Natural killer cell (primary cell): ENCODE measurements at regions of chr11 and their contacts with region 1.

Region 1: DNA sequence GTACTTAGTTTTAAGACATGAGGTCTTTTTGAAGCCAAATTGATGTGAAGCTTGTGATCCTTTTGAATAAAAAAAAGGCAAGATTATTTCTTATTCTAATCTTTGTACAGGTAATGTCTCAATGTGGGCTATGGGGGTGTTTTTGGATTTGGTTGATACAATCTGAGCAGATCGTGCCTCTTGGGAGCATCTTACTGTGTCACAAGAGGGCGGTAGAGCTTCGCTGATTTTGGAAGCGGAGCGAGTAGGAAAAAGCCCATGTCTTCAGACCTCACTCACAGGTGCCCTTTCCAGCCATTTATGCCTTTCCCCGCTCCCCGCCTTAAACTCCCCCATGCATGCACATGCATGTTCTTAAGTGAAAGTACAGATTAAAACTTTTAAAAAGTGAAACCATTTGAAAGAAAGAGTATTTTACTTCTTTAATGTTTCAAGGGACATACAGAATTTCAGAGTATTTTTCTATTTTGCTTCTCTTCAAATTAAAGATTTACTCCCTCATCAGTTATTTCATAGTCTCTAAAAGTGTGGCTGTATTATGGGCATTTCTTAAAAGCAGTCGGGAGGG is 18.8 kb downstream of the DDX25 start:
- DNase-seq: peak in 1 of 2 donors; percentile 80
- ATAC-seq: peak in 1 of 3 donors; percentile 60
- H3K4me3 ChIP-seq: no peak overlapping the region
- H3K4me3 Mint-ChIP-seq: no peak overlapping the region
- H3K27ac ChIP-seq: no peak overlapping the region
- H3K27ac Mint-ChIP-seq: no peak overlapping the region
- H3K4me1 ChIP-seq: no peaks in the 10 kb centered on the region
- H3K4me1 Mint-ChIP-seq: peaks cover 0 to 4% of the 10 kb centered on the region in 2 donors
- H3K27me3 ChIP-seq: no peaks in the 10 kb centered on the region
- H3K27me3 Mint-ChIP-seq: peaks cover 13 to 27% of the 10 kb centered on the region in 2 donors
- CTCF ChIP-seq: peak; percentile 32

Region 2: DNA sequence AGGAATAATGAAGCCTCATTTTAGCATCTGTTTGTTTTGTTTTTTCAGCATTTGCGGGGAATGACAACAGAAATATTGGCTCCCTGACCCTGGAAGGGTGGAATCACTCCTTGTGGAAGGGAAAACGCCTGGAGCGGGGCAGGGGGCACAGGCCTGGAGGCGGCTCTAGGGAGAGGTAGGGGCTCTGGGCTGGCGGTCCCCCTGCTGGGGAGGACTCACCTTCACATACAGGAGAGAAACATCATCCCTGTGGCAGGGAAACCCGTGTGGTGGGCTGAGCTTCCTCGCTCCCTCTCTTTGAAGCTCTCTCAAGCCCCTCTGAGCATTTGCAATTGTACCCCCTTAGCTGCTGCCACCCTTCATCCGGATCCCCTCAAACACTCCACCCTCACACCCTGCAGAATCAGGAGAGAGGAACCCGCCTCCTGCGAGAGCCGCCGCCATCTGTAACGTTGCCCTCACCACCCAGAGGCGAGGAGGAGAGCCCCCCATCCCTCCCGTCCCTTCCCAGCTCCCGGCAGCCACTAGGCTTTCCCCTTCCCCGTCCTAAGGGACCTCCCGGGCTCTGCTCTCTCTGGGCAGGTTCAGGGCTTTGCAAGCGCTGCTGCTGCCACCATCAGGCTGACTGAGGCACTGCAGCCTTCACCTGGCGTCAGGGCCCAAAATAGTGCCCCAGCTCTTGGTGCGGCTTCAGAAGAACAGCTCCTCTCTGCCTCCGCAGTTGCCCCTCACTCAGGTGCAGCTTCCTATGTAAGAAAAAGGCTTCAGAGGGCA is 1067.0 kb after region 1 on chr11:
- intact Hi-C with region 1: loop called (anchors 5 kb)
- DNase-seq: peak; percentile 56 to 62
- ATAC-seq: peak; percentile 64 to 90 (median 69)
- H3K4me3 ChIP-seq: no peak overlapping the region
- H3K4me3 Mint-ChIP-seq: no peak overlapping the region
- H3K27ac ChIP-seq: no peak overlapping the region
- H3K27ac Mint-ChIP-seq: no peak overlapping the region
- H3K4me1 ChIP-seq: no peaks in the 10 kb centered on the region
- H3K4me1 Mint-ChIP-seq: peaks cover 0 to 5% of the 10 kb centered on the region in 2 donors
- H3K27me3 ChIP-seq: no peaks in the 10 kb centered on the region
- H3K27me3 Mint-ChIP-seq: peaks cover 19 to 46% of the 10 kb centered on the region in 2 donors
- CTCF ChIP-seq: peak; percentile 78